Activated CD4-positive, alpha-beta memory T cell treated with anti-CD3 and anti-CD28 coated beads, Interleukin-2, amount 10 ng/mL, durations not matched to agents 7 days and 5 days (primary cell): ENCODE measurements at regions of chr7 and their contacts with region 1.

Region 1: DNA sequence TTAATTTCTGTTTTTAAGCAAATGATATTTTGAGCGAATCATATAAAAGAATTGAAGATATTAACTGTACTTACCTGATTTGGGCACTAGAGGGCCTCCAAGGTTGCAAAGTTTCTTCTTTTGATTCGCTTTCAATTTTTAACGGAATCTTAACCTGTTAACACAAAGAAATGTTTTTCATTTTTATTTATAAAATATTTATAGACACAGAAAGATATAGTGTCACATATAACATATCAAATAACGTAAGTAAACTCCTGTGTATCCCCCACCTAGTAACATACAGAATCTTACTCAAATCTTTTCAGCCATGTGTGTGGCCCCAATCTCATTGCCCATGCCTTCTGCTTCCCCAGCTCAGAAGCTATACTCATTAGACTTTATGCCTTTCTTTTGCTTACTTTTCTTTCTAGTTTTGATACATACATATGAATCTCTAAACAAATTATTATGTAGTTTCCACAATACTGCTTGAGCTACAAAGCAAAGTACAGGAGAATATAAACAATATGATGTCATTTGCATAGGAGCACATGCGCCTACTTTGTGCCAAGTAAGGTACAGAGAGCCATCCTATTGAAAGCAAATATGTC is 49.5 kb upstream of the ZPBP start:
- DNase-seq: no peak
- H3K4me3 Mint-ChIP-seq: peak overlapping the region; percentile 29
- H3K27ac Mint-ChIP-seq: peak overlapping the region; percentile 42
- H3K4me1 Mint-ChIP-seq: peaks cover 42% of the 10 kb centered on the region
- H3K27me3 Mint-ChIP-seq: peaks cover 12% of the 10 kb centered on the region

Region 2: GRCh38 chr7:50156706-50157105 is 14.2 kb after region 1 on chr7:
- CTCF ChIA-PET with region 1: interaction called, 16 read pairs
- POLR2A ChIA-PET with region 1: interaction called, 5 read pairs
- DNase-seq: no peak
- H3K4me3 Mint-ChIP-seq: no peak overlapping the region
- H3K27ac Mint-ChIP-seq: peak overlapping the region; percentile 33
- H3K4me1 Mint-ChIP-seq: peaks cover 28% of the 10 kb centered on the region
- H3K27me3 Mint-ChIP-seq: no peaks in the 10 kb centered on the region

Region 3: DNA sequence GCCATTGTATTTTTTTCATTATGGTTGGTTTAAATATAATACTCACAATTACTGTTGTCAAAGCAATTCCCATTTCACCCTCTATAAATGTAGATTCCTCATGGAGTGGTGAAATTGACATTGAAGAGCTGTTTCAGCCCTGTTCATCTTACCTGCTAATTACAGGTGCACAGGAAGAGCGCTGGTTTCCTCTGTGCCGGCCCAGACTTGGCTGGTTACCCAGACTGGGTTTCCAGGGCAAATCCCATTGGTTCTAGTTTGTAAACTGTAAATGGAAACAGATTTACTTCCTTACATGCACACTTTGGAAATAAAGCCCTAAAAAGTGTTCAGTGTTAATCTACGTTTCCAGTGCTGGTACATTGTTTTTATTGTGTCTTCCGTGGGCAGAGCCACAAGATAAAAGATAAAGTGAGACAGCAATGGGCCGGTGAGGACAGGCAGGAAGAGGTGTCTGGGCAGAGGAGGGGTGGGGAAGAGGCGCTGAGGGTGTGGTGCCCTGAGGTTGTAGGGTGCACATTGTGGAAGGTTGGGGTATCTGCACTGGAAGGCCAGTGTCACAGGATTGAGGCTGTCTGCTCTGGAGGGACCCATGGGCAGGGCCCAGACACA is 22.1 kb after region 1 on chr7:
- CTCF ChIA-PET with region 1: interaction called, 17 read pairs
- POLR2A ChIA-PET with region 1: interaction called, 3 read pairs
- DNase-seq: peak; percentile 55
- H3K4me3 Mint-ChIP-seq: peak overlapping the region; percentile 40
- H3K27ac Mint-ChIP-seq: peak overlapping the region; percentile 81
- H3K4me1 Mint-ChIP-seq: peaks cover 65% of the 10 kb centered on the region
- H3K27me3 Mint-ChIP-seq: no peaks in the 10 kb centered on the region